ENCODE measurements at regions of chrX and their contacts with region 1.

Region 1: DNA sequence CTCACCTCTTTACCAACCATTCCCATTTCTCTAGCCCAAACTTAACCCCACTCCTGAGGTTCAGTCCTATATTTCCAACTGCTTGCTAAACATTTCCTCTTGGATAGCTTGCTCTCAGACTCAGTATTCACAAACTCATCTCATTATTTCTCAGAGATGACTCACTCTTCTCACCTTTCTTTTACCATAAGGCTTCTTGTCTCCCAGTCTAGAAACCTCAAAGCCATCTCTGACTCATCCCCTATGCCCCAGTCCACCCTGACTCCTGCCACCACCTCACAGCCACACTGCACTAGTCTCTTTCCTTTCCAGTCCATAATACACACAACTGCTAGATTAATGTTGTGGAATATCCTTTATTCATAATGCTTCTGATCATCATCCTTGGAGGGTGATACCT is 4.8 kb downstream of the FRMPD3 start:
- DNase-seq: no peak
- ATAC-seq: peak; percentile 89
- H3K4me3 ChIP-seq: no peak overlapping the region
- H3K27ac ChIP-seq: no peak overlapping the region
- H3K4me1 ChIP-seq: no peaks in the 10 kb centered on the region
- H3K27me3 ChIP-seq: peaks cover 2 to 3% of the 10 kb centered on the region in 2 experiments; a peak in 2 of 4 replicates
- CTCF ChIP-seq: no peak
- EP300 ChIP-seq: peak in 1 of 2 experiments; percentile 15; a peak in 1 of 4 replicates
- POLR2A ChIP-seq: no peak
- RAD21 ChIP-seq: no peak

Region 2: DNA sequence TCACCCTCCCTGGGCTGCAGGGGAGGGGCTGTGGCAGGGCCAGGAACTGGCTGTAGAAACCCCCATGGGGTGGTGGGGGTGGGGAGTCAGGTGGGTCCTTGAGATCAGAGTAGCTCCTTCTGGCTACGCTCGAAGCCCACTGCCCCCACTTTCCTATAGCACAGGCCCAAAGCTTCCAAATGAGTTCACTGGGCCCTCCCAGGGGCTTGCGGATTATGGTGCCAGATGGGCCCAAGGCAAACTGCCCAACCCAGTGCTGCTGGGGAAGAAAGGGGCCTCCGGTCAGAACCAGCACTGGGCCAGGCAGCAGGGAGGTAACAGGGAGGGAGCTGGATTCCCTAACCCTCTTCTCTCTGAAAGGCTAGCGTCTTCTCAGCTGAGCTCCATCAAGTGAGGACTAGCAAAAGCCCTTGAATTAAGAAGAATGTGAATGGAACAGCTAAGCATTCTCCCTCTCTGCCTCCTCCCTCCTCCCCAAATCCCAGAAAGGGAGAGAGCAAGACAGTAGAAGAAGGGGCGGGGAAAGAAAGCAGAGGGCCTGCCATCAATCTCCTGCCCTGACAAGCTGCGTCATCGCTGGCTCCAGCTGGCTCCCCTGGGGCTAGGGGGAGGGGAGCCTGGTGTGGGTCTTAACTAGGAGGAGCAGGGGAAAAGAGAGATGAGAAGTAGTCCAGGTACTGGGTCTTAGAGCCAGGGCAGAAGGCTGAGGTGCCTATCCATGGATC is 29.9 kb after region 1 on chrX:
- CTCF ChIA-PET with region 1: interaction called, 4 read pairs
- POLR2A ChIA-PET with region 1: no interaction called
- RAD21 ChIA-PET with region 1: no interaction called
- SMC1A ChIA-PET with region 1: no interaction called
- in situ Hi-C with region 1: no loop called
- intact Hi-C with region 1: loop called (anchors 2 kb)
- DNase-seq: no peak
- ATAC-seq: peak; percentile 40
- H3K4me3 ChIP-seq: no peak overlapping the region
- H3K27ac ChIP-seq: no peak overlapping the region
- H3K4me1 ChIP-seq: no peaks in the 10 kb centered on the region
- H3K27me3 ChIP-seq: no peaks in the 10 kb centered on the region; a peak in 1 of 4 replicates
- CTCF ChIP-seq: no peak
- EP300 ChIP-seq: no peak
- POLR2A ChIP-seq: no peak
- RAD21 ChIP-seq: no peak

Region 3: DNA sequence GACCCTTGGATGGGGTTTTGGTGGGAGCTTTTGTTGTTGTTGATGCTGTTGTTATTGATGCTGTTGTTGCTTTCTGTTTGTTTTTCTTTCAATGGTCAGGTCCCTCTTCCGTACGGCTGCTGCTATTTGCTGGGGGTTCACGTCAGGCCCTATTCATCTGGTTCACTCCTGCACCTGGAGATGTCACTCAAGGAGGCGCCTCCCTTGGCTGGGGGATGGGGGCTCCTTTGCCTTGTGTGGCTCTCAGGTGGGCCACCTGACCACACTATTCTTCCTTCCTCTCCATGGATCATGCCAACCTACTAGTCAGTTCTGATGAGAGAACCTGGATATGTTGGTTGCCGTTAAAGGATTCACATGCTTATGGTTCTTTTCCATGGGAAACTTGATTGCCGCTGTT is 134.9 kb after region 1 on chrX:
- CTCF ChIA-PET with region 1: no interaction called
- POLR2A ChIA-PET with region 1: no interaction called
- RAD21 ChIA-PET with region 1: no interaction called
- SMC1A ChIA-PET with region 1: no interaction called
- in situ Hi-C with region 1: no loop called
- intact Hi-C with region 1: no loop called
- DNase-seq: no peak
- ATAC-seq: no peak
- H3K4me3 ChIP-seq: no peak overlapping the region
- H3K27ac ChIP-seq: no peak overlapping the region
- H3K4me1 ChIP-seq: no peaks in the 10 kb centered on the region
- H3K27me3 ChIP-seq: no peaks in the 10 kb centered on the region
- CTCF ChIP-seq: no peak
- EP300 ChIP-seq: no peak
- POLR2A ChIP-seq: no peak
- RAD21 ChIP-seq: no peak

Measured in GM12878 (cell line).